Activated CD8-positive, alpha-beta T cell treated with anti-CD3 and anti-CD28 coated beads, Interleukin-2, amount 10 ng/mL, durations not matched to agents 7 days and 5 days (primary cell): ENCODE measurements at regions of chr6 and their contacts with region 1.

Region 1: DNA sequence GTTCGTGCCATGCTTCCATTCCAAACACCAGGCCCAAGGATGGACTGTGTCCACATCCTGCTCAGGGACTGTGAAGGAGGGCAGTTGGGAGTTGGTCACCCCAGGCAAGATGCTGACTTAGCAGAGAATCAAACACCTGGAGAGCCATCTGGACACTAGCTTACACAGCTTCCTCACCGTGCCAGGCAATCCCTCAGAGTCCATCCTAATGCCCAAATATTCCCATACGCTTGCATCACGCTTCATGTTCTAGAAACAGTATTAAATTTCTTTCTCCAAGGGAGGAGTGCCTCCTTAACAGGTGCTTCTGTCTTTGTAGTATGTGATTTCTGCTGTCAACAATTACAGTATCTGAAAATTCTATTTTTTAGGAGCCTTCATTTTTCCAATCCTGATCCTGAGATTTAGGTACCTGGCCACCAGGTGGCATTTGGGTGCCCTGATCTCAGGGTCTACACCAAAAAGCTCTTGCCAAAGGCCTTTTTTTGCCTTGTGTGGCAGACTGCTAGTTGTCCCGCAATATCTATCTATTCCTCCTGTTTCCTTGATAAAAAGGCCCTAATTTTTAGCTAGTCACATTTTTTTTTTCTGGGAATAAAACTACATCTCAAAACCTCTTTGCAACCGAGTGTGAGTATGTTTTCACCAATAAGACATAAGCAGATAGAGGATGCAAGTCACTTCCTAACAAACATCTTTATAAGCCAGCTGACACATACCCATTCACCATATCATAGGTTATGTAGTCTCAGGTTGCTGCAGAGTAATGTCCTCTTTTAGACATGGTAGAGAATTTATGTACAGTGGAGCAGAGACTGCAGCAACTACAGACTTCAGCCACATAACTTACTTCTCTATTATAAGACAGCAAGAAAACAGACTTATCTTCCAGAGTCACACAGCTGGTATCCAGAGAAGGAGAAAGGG is 85.0 kb downstream of the PREP start:
- DNase-seq: no peak
- ATAC-seq: no peak
- H3K4me3 Mint-ChIP-seq: no peak overlapping the region
- H3K27ac Mint-ChIP-seq: no peak overlapping the region
- H3K4me1 Mint-ChIP-seq: no peaks in the 10 kb centered on the region
- H3K27me3 Mint-ChIP-seq: no peaks in the 10 kb centered on the region

Region 2: GRCh38 chr6:105402939-105403935 is 85.4 kb after region 1 on chr6 and contains the start of gene PREP:
- CTCF ChIA-PET with region 1: interaction called, 21 read pairs
- POLR2A ChIA-PET with region 1: no interaction called
- DNase-seq: peak; percentile 86
- ATAC-seq: peak; percentile 95
- H3K4me3 Mint-ChIP-seq: peak within 1 kb of the TSS; percentile 91
- H3K27ac Mint-ChIP-seq: peak within 1 kb of the TSS; percentile 82
- H3K4me1 Mint-ChIP-seq: peaks cover 47% of the 10 kb centered on the region
- H3K27me3 Mint-ChIP-seq: peaks cover 7% of the 10 kb centered on the region
- total RNA-seq, gene PREP: 42.8 to 44.1 TPM